Activated CD4-positive, alpha-beta T cell treated with anti-CD3 and anti-CD28 coated beads for 36 hours (primary cell): ENCODE measurements at regions of chr2 and their contacts with region 1.

Region 1: GRCh38 chr2:9984217-9984739 is 32.8 kb downstream of the GRHL1 start:
- DNase-seq: peak; percentile 51
- ATAC-seq: peak; percentile 80
- H3K4me3 Mint-ChIP-seq: no peak overlapping the region
- H3K27ac Mint-ChIP-seq: no peak overlapping the region
- H3K4me1 Mint-ChIP-seq: peaks cover 16% of the 10 kb centered on the region
- H3K27me3 Mint-ChIP-seq: peaks cover 7% of the 10 kb centered on the region

Region 2: GRCh38 chr2:9799665-9800632 is 184.3 kb before region 1 on chr2:
- CTCF ChIA-PET with region 1: interaction called, 10 read pairs
- POLR2A ChIA-PET with region 1: no interaction called
- intact Hi-C with region 1: no loop called
- DNase-seq: peak; percentile 93
- ATAC-seq: peak; percentile 92
- H3K4me3 Mint-ChIP-seq: peak overlapping the region; percentile 39
- H3K27ac Mint-ChIP-seq: peak overlapping the region; percentile 86
- H3K4me1 Mint-ChIP-seq: peaks cover 24% of the 10 kb centered on the region
- H3K27me3 Mint-ChIP-seq: peaks cover 2% of the 10 kb centered on the region

Region 3: DNA sequence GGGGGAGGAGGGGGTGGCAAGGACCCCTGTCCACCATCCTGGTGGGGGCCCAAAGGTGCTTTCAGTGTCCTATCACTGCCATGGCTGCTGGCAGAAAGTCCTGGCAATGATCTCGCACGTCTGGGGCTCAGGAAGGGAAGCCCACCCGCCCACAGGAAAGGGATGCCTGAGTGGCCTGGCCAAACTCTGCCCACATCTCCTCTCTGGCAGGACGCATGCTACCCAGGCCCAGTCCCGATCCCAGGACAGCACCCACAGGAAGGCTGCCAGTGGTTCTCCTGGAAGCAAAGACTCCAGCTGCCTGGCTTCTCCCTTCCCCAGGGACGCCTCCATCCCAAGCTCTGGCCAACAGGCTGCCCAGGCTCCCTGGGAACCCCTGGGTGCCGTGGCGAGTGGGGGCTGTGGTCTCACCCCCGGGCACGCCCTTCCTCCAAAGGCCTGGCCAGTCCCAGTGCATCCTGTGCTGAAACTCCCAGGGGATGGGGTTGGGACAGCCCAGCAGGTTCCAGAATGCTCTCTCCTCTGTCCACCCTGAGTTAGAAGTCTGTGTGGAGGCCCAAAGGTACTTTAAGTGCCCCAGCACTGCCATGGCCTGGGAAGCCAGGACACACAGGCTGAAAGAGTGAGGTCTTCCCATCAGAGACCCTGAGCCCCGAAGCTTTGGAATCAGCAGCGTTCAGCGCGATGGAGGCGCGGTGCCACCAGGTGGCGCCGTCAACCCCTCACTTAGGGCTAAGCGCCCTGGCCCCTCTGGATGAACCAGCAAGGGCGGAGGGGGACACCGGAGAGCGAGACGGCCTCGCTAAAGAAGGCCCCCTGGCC is 170.8 kb before region 1 on chr2:
- CTCF ChIA-PET with region 1: interaction called, 10 read pairs
- POLR2A ChIA-PET with region 1: no interaction called
- intact Hi-C with region 1: no loop called
- DNase-seq: peak; percentile 84
- ATAC-seq: peak; percentile 90
- H3K4me3 Mint-ChIP-seq: no peak overlapping the region
- H3K27ac Mint-ChIP-seq: no peak overlapping the region
- H3K4me1 Mint-ChIP-seq: peaks cover 9% of the 10 kb centered on the region
- H3K27me3 Mint-ChIP-seq: peaks cover 3% of the 10 kb centered on the region

Region 4: DNA sequence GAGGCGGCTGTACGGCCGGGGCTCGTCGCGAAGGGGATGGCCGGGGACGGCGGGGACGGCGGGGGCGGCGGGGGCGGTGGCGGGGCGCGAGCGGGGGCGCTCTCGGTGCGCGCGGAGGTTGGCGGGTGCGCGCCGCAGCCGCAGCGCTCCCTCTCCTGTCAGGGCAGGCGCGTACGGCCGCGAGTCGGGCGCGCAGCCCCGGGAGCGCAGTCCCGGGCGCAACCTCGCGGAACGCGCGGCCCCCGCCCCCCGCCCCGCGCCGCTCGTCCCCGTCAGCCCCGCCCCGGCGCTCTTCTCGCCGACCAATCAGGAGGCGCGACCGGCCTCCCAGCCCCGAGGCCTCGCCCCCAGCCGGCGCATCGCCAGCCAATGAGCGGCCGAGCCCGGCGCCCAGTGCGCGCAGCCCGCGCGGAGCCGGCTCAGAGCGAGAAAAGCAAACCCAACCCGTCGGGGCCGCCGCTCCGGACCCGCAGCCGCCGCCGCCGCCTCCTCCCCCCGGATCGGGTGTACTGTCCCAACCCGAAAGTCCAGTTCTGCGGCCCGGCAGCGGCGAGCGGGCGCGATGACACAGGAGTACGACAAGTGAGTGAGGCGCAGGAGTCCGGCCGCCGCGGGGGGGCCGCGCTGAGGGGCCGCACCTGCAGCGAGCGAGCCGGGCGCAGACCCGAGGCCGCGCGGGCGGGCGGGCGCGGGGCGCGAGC is 32.9 kb before region 1 on chr2 and contains the start of gene GRHL1:
- CTCF ChIA-PET with region 1: interaction called, 12 read pairs
- POLR2A ChIA-PET with region 1: no interaction called
- intact Hi-C with region 1: no loop called
- DNase-seq: peak; percentile 95
- ATAC-seq: peak; percentile 98
- H3K4me3 Mint-ChIP-seq: peak within 1 kb of the TSS; percentile 68
- H3K27ac Mint-ChIP-seq: no peak within 1 kb of the TSS
- H3K4me1 Mint-ChIP-seq: peaks cover 4% of the 10 kb centered on the region
- H3K27me3 Mint-ChIP-seq: peaks cover 39% of the 10 kb centered on the region
- total RNA-seq, gene GRHL1: 0.27 to 0.53 TPM

Region 5: GRCh38 chr2:9961013-9961412 is 23.3 kb before region 1 on chr2:
- CTCF ChIA-PET with region 1: interaction called, 17 read pairs
- POLR2A ChIA-PET with region 1: no interaction called
- intact Hi-C with region 1: no loop called
- DNase-seq: no peak
- ATAC-seq: no peak
- H3K4me3 Mint-ChIP-seq: no peak overlapping the region
- H3K27ac Mint-ChIP-seq: no peak overlapping the region
- H3K4me1 Mint-ChIP-seq: peaks cover 15% of the 10 kb centered on the region
- H3K27me3 Mint-ChIP-seq: peaks cover 2% of the 10 kb centered on the region

Region 6: DNA sequence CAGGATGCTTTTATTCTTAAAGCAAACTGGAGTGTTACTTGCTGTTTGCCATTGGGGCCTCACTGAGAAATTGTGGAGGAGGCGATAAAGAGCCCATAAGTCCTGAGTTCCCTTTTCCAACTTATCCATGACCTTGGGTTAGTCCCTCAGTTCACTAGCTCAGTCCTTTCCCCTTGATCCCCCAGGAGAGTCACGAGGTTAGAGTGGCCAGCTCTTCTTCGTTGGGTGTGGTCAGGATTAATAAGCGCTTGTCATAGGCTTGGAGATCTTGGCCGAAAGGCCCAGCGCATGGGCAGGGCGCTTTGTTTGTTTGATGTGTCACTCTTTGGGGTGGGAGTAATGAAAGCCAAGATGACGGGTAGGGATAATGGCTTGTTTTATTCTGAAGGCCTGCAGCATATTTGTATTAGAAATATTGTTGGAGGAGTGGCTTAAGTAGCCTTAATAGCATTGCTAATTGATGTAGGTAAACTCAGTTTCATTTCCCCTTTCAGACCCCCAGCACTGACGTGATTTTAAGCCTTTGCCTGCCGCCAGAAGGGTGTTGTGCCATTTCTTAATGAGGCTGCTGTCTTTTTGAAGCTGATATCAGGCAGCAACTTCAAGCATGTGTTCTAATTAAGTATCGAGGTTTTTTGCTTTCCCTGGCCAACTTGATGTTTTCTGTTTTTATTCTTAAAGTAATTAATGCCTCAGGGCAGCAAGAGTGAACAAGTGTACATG is 17.1 kb before region 1 on chr2:
- CTCF ChIA-PET with region 1: interaction called, 35 read pairs
- POLR2A ChIA-PET with region 1: interaction called, 3 read pairs
- intact Hi-C with region 1: no loop called
- DNase-seq: no peak
- ATAC-seq: no peak
- H3K4me3 Mint-ChIP-seq: no peak overlapping the region
- H3K27ac Mint-ChIP-seq: no peak overlapping the region
- H3K4me1 Mint-ChIP-seq: peaks cover 21% of the 10 kb centered on the region
- H3K27me3 Mint-ChIP-seq: no peaks in the 10 kb centered on the region

Region 7: DNA sequence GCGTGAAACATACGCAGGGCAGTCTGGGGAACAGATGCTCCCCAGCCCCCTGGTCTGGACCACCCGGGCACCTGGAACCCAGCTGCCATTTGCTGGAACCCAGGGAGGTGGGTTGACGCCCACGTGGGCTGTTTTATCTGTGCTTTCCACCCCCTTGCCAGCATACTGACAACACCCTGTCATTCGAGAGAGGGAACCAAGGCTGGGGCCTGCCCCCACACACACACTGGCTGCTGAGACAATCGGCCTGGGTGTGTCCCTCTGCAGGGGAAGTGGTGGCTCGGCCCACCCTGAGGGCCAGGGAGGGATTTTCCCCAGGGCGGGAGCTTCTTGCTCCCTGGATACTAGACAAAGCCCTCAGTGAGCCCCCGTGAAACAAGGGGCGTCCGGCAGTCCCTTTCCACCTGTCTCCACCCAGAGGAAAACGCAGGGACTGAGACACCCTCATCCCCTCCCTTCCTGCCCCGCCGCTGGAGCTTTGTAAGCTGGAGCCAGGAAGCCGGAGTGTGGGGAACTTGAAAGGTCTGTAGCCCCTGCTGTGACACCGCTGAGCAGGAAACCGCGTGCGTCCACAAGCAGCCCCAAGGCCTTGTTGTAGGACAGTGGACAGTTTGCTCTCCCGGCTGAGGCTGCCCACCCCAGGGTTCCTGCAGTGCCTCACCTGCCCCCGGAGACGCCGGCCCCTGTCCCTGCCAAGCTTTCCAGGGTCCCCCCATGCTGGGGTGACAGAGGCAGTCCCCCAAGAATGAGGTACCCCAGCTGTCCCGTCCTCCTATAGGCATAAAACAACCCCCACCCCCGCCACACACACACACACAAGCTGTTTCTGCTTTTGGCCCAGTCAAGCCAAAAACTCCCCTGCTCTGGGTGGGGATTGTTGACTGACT is 45.0 kb after region 1 on chr2:
- CTCF ChIA-PET with region 1: interaction called, 12 read pairs
- POLR2A ChIA-PET with region 1: no interaction called
- intact Hi-C with region 1: no loop called
- DNase-seq: peak; percentile 41
- ATAC-seq: peak; percentile 78
- H3K4me3 Mint-ChIP-seq: no peak overlapping the region
- H3K27ac Mint-ChIP-seq: no peak overlapping the region
- H3K4me1 Mint-ChIP-seq: peaks cover 14% of the 10 kb centered on the region
- H3K27me3 Mint-ChIP-seq: no peaks in the 10 kb centered on the region